H1 (cell line): ENCODE measurements at regions of chr16 and their contacts with region 1.

Region 1: DNA sequence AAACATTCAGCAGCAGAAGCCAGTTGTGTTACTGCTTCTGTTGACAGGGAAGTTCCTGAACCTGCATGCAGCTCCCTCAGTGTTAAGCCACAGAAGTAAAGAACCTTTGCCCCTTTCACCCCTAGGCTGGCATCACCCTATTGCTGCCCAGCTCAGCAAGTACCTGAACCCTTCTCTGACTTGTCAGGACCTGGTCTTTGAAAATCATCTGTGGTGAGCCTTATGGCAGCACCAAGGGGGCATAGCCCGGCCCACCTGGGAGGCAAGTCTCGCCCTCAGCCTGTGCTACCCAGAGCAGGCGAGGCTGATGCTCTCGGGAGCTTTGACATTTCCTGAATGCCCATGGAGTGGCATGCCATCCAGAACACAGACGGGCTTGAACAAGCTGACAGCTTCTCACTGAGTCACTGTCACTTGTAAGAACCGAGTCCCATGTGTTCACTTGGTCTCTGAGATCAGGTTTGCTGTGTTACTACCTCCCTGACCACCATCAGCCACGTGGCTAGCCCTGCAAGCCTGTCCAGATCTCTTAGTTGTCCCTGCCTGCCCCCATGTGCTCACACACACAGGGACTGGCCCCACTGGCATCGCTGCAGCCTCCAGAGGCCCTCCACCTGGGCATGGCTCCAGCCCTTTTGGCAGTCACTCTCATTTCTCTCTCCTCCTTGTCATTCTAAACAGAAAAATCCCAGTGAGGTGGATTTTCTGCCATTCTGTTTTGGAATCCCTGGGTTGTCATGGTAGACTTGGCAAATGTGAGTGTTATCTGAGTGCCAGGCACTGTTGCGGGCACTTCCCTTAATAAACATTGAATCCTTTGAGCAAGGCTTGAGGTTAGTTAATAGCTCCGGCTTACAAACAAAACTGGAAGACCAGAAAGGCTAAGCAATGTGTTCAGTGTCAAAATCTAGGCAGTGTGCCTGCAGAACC is 2.9 kb upstream of the CARMIL2 start:
- DNase-seq: no peak
- H3K4me3 ChIP-seq: no peak overlapping the region
- H3K27ac ChIP-seq: no peak overlapping the region
- H3K4me1 ChIP-seq: peaks cover 0 to 9% (median 2%) of the 10 kb centered on the region in 4 experiments; a peak in 5 of 7 replicates
- H3K27me3 ChIP-seq: peaks cover 0 to 11% (median 6%) of the 10 kb centered on the region in 4 experiments; a peak in 4 of 7 replicates
- CTCF ChIP-seq: no peak
- EP300 ChIP-seq: no peak
- POLR2A ChIP-seq: no peak
- RAD21 ChIP-seq: no peak

Region 2: GRCh38 chr16:67530013-67530939 is 111.8 kb before region 1 on chr16:
- CTCF ChIA-PET with region 1: interaction called, 18 read pairs
- POLR2A ChIA-PET with region 1: interaction called, 10 read pairs
- DNase-seq: peak in 1 of 2 experiments; percentile 69
- H3K4me3 ChIP-seq: peak overlapping the region; percentile 32 to 68 (median 48)
- H3K27ac ChIP-seq: no peak overlapping the region
- H3K4me1 ChIP-seq: peaks cover 0 to 12% (median 8%) of the 10 kb centered on the region in 4 experiments; a peak in 6 of 7 replicates
- H3K27me3 ChIP-seq: peaks cover 60 to 98% (median 91%) of the 10 kb centered on the region in 4 experiments
- CTCF ChIP-seq: no peak
- EP300 ChIP-seq: no peak
- POLR2A ChIP-seq: no peak
- RAD21 ChIP-seq: no peak

Region 3: DNA sequence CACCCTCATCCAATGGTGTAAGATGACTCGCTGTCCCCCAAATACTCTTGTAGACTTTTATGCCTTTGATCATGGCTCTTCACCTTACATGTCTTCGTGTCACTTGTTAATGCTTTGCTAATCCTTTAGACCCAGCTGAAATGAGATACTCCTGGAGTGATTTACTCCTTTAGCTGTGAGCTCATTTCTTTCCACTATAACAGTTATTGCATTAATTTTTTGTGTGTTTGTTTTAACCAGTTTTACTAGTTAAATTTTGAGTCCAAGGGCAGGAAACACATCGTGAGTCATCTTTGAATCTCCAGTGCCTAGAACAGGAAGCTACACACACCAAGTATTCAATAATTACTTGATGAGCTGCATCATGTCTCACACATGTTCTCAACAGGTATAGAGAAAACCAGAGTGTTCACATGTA is 86.2 kb before region 1 on chr16:
- CTCF ChIA-PET with region 1: interaction called, 14 read pairs
- POLR2A ChIA-PET with region 1: interaction called, 3 read pairs
- DNase-seq: no peak
- H3K4me3 ChIP-seq: no peak overlapping the region
- H3K27ac ChIP-seq: no peak overlapping the region
- H3K4me1 ChIP-seq: peaks cover 0 to under 1% (median 0%) of the 10 kb centered on the region in 4 experiments; a peak in 1 of 7 replicates
- H3K27me3 ChIP-seq: no peaks in the 10 kb centered on the region
- CTCF ChIP-seq: no peak
- EP300 ChIP-seq: no peak
- POLR2A ChIP-seq: no peak
- RAD21 ChIP-seq: no peak

Region 4: GRCh38 chr16:67613808-67614207 is 28.2 kb before region 1 on chr16:
- CTCF ChIA-PET with region 1: interaction called, 10 read pairs
- POLR2A ChIA-PET with region 1: no interaction called
- DNase-seq: peak; percentile 15 to 73
- H3K4me3 ChIP-seq: no peak overlapping the region
- H3K27ac ChIP-seq: no peak overlapping the region
- H3K4me1 ChIP-seq: no peaks in the 10 kb centered on the region
- H3K27me3 ChIP-seq: no peaks in the 10 kb centered on the region
- CTCF ChIP-seq: peak; percentile 49 to 73 (median 57)
- EP300 ChIP-seq: no peak
- POLR2A ChIP-seq: no peak
- RAD21 ChIP-seq: peak; percentile 18 to 35; a peak in 3 of 4 replicates